WTC11 (cell line): ENCODE measurements at regions of chr6 and their contacts with region 1.

Region 1: DNA sequence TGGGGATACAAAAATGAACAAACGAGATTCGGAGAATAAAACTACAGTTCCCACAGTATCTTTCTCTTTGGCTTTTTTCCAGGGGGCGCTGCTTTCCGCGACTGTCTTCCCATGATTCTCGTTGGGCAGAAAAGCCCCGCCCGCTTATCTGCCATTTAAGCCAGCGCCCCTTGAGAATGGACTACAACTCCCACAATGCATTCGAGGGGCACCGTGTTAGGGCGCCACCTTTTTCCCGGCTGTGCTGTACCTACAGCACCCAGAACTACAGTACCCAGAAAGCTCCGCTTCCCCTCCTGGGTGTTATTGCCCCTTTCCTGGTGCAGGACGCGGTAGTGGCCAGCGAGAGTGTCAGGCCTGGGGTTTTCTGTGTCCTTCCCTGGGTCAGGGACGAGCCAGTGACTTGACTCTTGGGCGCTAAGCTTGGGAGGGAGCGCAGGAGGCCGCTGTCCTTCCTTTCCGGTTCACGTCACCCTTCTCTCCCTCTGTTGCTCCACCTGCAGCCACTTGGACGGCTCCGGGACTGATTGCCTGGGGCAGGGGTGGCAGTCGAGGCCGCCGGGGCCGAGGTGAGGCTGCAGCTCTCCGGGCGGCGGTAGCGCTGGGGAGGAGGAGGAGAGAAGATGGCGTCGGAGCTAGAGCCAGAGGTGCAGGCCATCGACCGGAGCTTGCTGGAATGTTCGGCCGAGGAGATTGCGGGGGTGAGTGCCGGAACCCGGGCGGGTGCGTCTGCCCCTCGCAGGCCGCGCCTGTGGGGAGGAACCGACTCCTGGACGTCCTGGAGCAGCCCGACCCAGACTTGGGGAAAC is at the start of gene UBR2:
- DNase-seq: peak; percentile 96
- ATAC-seq: peak; percentile 98
- H3K4me3 Mint-ChIP-seq: peak within 1 kb of the TSS; percentile 90
- H3K27ac Mint-ChIP-seq: peak within 1 kb of the TSS; percentile 93
- H3K4me1 Mint-ChIP-seq: peaks cover 8% of the 10 kb centered on the region
- H3K27me3 Mint-ChIP-seq: peaks cover 4% of the 10 kb centered on the region; the same call in 1 of the 2 replicates
- CTCF ChIP-seq: 0 out of 2 replicates have a peak, but pooled peaks have one; percentile 26
- total RNA-seq, gene UBR2: 16.4 to 18.8 TPM (median 17.1 TPM) in 3 replicates

Region 2: DNA sequence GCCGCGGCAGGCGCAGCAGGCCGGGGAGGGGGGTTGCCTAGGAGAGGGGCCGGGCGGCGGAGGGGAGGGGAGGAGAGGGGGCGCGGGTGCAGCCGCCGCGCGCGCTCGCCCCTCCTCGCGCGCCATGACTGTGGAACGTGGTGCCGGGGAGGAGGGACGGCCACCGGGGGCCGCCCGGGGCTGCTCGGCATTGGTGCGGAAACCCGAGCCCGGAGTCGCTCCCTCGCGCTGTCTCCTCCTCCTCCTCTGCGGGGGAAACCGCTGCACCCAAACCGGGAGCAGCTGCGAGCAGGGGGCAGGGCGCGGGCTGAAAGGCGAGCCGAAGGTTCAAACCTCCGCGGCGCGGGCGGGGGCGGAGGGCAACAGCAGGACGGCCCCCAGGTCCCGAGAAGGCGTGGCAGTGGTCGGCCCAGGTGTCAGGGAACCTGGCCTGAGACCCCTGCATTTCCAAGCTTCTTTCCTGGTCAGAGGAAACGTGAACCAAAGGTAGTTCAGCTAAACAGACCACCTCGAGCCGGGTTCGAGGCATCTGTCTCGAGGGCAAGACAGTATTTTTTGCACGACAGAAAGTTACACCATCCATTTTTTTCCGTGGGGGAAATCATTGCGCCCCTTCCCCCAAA is 110.8 kb before region 1 on chr6:
- CTCF ChIA-PET with region 1: interaction called, 7 read pairs
- POLR2A ChIA-PET with region 1: interaction called, 16 read pairs
- DNase-seq: peak; percentile 92
- ATAC-seq: peak; percentile 66
- H3K4me3 Mint-ChIP-seq: peak overlapping the region; percentile 100
- H3K27ac Mint-ChIP-seq: peak overlapping the region; percentile 84
- H3K4me1 Mint-ChIP-seq: peaks cover 43% of the 10 kb centered on the region
- H3K27me3 Mint-ChIP-seq: peaks cover 4% of the 10 kb centered on the region
- CTCF ChIP-seq: no peak